Activated naive CD4-positive, alpha-beta T cell treated with anti-CD3 and anti-CD28 coated beads, Interleukin-2, amount 10 ng/mL, durations not matched to agents 7 days and 5 days (primary cell): ENCODE measurements at regions of chr1 and their contacts with region 1.

Region 1: DNA sequence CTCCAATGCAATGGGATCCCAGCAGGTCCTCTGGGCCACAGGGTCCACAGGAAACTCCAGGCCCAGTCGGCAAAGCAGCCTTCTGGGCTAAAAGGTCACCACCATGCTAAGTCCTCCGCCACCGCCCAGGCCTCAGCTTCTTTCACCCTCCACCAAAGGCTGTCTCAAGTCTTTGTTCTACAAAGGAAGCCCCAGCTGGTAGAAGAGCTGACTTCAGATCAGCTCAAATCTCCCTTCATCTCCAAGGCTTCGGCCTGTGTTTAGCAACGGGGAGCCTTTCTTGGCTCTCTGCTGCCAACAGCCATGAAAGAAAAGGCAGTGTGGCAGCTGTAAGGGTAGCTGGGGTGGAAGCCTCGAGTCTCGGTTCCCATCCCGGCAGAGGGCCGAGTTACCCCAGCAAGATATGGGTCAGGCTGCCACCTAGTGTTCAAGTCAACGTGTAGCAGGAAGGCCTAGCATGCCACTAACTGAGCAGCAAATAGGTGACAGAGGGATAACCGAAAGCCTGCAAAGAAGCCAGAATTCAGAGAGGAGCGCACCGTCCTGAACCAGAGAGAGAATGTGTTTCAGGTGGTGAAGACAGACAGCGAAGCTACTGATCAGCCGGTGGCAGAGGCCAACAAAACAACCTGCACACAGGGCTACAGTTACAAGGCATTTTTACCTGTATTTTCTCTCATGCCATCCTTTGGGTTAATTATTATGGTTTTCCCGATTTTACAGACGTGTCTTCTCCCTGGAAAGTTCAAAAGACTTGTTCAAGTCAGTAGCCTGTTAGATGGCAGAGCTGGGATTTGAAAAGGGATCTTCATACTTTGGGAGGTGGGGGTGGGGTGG is 26.8 kb upstream of the CRNN start:
- DNase-seq: peak; percentile 78
- H3K4me3 Mint-ChIP-seq: no peak overlapping the region
- H3K27ac Mint-ChIP-seq: no peak overlapping the region
- H3K4me1 Mint-ChIP-seq: no peaks in the 10 kb centered on the region
- H3K27me3 Mint-ChIP-seq: peaks cover 30% of the 10 kb centered on the region

Region 2: DNA sequence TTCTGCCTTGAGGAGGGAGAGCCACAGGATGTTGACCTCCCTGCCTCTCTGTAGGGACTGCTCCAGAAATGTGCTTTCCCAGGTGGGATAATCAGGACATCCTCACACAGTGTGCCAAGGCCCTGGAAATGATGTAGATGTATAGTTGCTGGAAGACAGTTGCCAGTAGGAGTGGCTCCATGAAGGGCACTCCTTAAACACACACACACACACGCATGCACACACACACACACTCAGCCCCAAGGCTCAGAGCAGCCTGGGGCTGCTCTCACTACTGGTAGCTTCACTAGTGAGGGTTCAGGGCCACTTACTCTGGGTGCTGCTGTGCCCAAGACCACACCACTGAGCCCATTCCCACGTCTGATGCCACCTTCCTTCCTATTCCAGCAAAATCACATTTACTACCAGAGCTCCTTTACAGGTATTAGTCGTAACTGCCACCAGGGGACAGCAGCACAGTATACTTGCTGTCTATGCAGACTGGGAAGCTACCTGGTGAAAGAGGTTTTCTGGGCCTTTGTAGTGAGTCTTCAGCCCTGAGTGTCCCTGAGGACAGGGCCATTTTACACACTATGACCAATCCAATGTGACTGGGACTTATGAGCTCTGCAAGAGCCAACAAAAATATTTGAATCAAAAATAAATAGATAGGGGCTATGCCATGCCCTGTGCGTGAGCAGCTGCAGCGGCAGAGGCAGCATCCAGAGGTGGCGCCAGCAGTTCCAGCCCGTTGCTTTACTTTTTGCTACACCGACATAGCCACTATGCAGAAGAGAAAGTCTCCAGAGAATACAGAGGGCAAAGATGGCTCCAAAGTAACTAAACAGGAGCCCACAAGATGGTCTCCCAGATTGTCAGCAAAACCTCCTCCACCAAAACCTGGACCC is 41.8 kb before region 1 on chr1:
- CTCF ChIA-PET with region 1: interaction called, 10 read pairs
- DNase-seq: no peak
- H3K4me3 Mint-ChIP-seq: no peak overlapping the region
- H3K27ac Mint-ChIP-seq: no peak overlapping the region
- H3K4me1 Mint-ChIP-seq: no peaks in the 10 kb centered on the region
- H3K27me3 Mint-ChIP-seq: peaks cover 15% of the 10 kb centered on the region

Region 3: GRCh38 chr1:152546704-152547103 is 105.9 kb after region 1 on chr1:
- CTCF ChIA-PET with region 1: no interaction called
- DNase-seq: no peak
- H3K4me3 Mint-ChIP-seq: no peak overlapping the region
- H3K27ac Mint-ChIP-seq: no peak overlapping the region
- H3K4me1 Mint-ChIP-seq: no peaks in the 10 kb centered on the region
- H3K27me3 Mint-ChIP-seq: peaks cover 3% of the 10 kb centered on the region